ENCODE measurements at regions of chr6 and their contacts with region 1.

Region 1: GRCh38 chr6:163427498-163428254 is 13.2 kb downstream of the QKI start:
- H3K4me3 Mint-ChIP-seq: no peak overlapping the region
- H3K27ac Mint-ChIP-seq: no peak overlapping the region
- H3K4me1 Mint-ChIP-seq: peaks cover 58% of the 10 kb centered on the region
- H3K27me3 Mint-ChIP-seq: no peaks in the 10 kb centered on the region

Region 2: DNA sequence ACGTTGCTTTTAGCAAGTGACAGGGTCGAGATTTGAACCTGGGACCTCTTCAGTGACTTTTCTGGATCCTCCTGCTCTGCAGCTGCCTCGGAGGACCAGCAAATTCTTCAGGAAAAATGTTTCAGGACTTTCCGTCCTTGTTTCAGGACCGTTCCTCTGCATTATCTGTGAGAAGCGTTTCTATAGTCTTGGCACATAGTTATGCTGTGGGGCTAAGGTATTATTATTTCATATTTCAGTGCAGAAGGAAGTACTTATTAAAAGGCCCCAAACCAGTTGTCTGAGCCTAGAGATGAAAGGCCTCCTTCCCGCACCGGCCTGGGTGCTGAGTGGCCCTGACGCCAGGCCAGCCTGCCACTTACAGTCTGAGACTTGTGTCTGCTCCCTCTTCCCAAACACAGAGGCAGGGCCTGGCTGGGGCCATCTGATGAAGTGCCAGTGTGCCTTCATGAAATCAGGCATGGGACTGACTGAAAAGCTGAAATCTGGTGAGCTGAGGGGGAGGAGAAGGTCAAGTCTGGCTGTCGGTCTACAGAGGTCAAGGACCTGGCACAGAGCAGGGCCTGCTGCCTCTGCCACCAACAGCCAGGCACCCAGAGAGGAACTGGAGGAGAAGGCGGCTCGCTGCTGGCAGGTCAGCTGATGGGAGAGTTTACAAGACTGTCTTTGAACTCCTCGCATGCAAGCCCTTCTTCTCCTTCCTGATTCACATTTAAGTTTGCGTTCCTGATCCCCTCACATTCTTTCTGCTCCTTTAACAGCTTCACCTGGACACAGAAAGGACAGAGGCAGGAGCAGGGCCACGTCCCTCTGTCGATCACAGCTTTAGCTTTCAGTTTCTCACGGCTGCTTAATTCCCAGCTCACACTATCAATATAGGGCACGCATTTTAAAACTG is 22.0 kb before region 1 on chr6:
- intact Hi-C with region 1: no loop called
- H3K4me3 Mint-ChIP-seq: peak overlapping the region; percentile 79
- H3K27ac Mint-ChIP-seq: peak overlapping the region; percentile 99
- H3K4me1 Mint-ChIP-seq: peaks cover 69% of the 10 kb centered on the region
- H3K27me3 Mint-ChIP-seq: no peaks in the 10 kb centered on the region

Region 3: GRCh38 chr6:163460307-163460782 is 32.7 kb after region 1 on chr6:
- intact Hi-C with region 1: loop called (anchors 5 kb)
- H3K4me3 Mint-ChIP-seq: peak overlapping the region; percentile 67
- H3K27ac Mint-ChIP-seq: peak overlapping the region; percentile 32
- H3K4me1 Mint-ChIP-seq: peaks cover 78% of the 10 kb centered on the region
- H3K27me3 Mint-ChIP-seq: no peaks in the 10 kb centered on the region

Region 4: DNA sequence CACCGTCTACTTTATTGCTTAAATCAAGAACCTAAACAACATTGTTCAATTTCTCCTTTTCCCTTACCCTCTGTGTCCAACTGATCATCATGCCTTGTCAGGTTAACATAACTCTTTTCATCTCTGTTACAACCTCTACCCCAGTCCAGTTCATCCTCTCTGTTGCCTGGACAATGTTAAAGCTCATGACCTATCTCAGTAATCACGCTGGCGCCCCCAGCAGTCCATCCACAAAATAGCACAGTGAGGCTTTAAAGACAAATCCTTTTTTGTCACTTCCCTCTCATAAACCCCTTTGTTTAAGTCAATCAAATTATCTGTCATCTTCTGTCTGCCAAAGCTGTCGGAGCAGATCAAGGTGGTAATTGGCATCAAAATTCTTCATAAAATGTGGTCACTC is 127.0 kb after region 1 on chr6:
- intact Hi-C with region 1: loop called (anchors 5 kb)
- H3K4me3 Mint-ChIP-seq: no peak overlapping the region
- H3K27ac Mint-ChIP-seq: no peak overlapping the region
- H3K4me1 Mint-ChIP-seq: peaks cover 24% of the 10 kb centered on the region
- H3K27me3 Mint-ChIP-seq: no peaks in the 10 kb centered on the region

Measured in dendritic cell treated with granulocyte-macrophage colony-stimulating factor and Interleukin-4, amounts not matched to agents 40 ng/mL and 50 ng/mL, for 4 days (primary cell).